Activated CD8-positive, alpha-beta memory T cell treated with anti-CD3 and anti-CD28 coated beads, Interleukin-2, amount 10 ng/mL, durations not matched to agents 7 days and 5 days (primary cell): ENCODE measurements at regions of chr1 and their contacts with region 1.

Region 1: GRCh38 chr1:25895365-25895993 is 10.7 kb downstream of the STMN1 start:
- DNase-seq: peak; percentile 93
- ATAC-seq: peak; percentile 98
- H3K4me3 Mint-ChIP-seq: no peak overlapping the region
- H3K27ac Mint-ChIP-seq: peak overlapping the region; percentile 6
- H3K4me1 Mint-ChIP-seq: peaks cover 27% of the 10 kb centered on the region
- H3K27me3 Mint-ChIP-seq: no peaks in the 10 kb centered on the region

Region 2: DNA sequence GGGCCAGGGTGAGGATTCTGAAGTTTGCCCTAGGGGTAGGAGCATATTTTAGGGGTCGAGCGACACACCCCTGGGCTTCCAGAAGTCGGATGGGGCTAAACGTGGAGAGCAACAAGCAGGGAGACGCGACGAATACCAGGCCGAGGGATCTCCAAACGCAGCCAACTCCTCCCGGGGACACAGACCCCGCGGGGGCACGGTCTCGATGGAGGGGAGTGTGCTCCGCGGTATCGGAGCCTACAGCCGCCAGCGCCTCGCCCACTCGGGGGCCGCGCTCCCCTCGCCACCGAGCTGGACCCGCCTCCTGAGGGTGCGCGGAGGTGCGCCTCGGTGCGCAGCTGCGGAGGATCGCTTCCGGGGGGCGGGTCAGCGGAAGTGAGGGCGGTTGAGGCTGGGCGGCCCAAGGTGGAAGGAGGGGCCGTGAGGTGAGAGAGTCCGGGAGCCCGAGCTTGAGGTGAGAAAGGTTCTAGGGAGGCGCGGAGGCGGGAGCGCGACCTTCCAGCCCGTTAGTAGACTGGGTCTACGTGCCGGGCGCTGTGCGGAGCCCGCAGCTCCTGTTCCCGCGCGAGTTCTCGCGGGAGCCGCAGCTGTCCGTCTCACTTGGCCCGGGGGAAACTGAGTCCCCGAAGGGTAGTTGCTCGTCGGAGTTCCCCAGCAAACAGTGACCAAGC is 75.8 kb before region 1 on chr1 and contains the start of gene MTFR1L:
- CTCF ChIA-PET with region 1: interaction called, 11 read pairs
- DNase-seq: peak; percentile 96
- ATAC-seq: peak; percentile 88
- H3K4me3 Mint-ChIP-seq: peak within 1 kb of the TSS; percentile 91
- H3K27ac Mint-ChIP-seq: peak within 1 kb of the TSS; percentile 92
- H3K4me1 Mint-ChIP-seq: peaks cover 23% of the 10 kb centered on the region
- H3K27me3 Mint-ChIP-seq: no peaks in the 10 kb centered on the region
- total RNA-seq, gene MTFR1L: 28.9 to 31.2 TPM

Region 3: DNA sequence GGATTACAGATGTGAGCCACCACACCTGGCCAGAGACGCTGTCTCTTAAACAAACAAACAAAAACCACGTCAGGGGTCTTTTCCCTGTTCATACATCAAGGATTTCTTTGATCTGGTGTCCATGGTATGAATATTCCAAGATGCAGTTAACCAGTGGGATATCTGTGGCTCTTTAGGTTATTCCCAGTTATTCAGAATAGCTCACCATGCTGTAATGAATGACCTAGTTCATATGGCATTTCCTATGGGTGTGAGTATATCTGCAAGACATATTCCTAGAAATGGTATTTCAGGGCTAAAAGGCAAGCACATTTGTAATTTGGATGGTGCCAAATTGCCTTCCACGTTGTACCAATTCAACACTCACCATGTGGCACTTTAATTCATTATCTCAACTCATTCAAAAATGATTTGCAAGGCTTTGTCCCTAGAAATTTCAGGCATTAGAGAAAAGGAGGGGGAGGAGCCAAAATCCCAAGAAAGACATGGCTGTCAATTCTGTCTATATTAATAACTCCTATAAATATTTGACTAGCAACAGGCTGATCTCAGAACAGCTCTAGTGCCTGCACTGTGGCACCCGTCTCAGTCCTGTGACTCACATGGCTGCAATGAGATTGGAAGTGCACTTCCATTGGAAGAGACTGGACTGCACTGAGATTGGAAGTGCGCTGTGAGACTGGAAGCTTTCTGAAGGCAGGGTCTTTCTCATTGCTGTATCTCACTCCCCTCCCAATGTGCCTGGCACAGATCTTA is 16.8 kb after region 1 on chr1:
- CTCF ChIA-PET with region 1: interaction called, 52 read pairs
- DNase-seq: no peak
- ATAC-seq: no peak
- H3K4me3 Mint-ChIP-seq: no peak overlapping the region
- H3K27ac Mint-ChIP-seq: no peak overlapping the region
- H3K4me1 Mint-ChIP-seq: no peaks in the 10 kb centered on the region
- H3K27me3 Mint-ChIP-seq: peaks cover 14% of the 10 kb centered on the region

Region 4: DNA sequence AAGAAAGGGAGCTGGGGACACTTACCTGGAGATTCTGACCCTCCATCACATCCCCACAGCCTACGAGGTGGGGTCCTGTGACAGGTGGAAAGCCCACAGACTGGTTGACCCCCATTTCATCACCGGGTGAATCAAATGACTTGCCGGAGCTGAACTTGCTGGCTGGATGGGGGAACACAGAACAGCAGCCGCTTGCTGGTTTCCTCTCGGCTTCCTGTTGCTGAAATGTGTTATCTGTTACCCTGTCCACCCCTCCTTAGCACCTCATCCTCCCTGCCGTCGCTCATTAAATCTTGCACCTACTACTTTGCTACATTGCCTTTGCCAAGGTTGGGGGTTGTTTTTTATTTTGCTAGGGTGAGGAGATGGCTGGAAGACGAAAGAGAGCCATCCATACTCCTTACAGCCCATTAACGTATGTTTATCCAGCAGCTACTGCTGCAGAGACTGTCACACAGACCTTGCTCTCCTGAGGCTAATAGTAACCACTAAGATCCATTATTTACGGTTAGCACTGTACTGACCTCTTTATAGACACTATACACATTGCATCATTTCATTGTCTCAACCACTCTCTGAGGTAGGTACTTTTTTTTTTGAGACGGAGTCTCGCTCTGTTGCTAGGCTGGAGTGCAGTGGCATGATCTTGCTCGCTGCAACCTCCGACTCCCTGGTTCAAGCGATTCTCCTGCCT is 95.4 kb after region 1 on chr1:
- CTCF ChIA-PET with region 1: interaction called, 309 read pairs
- DNase-seq: peak; percentile 78
- ATAC-seq: peak; percentile 96
- H3K4me3 Mint-ChIP-seq: peak overlapping the region; percentile 77
- H3K27ac Mint-ChIP-seq: peak overlapping the region; percentile 76
- H3K4me1 Mint-ChIP-seq: peaks cover 36% of the 10 kb centered on the region
- H3K27me3 Mint-ChIP-seq: no peaks in the 10 kb centered on the region

Region 5: DNA sequence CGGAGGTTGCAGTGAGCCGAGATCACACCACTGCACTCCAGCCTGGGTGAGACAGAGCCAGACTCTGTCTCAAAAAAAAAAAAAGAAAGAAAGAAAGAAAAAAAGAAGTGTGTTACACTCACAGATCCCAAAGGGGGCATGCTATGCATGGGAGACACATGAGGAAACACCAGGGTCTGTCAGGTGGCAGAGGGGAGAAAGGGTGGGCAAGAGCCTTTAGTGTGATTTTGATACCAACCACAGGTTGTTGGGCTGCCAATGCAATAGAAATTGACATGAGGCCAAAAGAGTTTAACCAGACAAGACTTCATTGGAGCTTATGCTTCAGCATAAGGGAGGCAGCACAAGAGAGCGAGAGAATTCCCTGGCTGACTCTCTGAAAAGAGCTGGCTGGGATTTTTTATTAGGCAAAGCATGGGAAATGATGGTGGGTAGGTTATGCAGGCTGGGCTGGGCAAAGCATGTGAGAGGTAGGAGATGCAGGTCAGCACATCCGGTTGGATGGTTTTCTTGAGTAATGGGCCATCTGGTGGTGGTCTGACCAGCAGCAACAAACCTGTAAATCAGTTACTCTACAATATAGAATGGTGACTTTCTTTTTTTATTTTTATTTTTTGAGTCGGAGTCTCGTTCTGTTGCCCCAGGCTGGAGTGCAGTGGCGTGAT is 114.4 kb after region 1 on chr1:
- CTCF ChIA-PET with region 1: interaction called, 18 read pairs
- DNase-seq: no peak
- ATAC-seq: no peak
- H3K4me3 Mint-ChIP-seq: no peak overlapping the region
- H3K27ac Mint-ChIP-seq: no peak overlapping the region
- H3K4me1 Mint-ChIP-seq: no peaks in the 10 kb centered on the region
- H3K27me3 Mint-ChIP-seq: peaks cover 12% of the 10 kb centered on the region